Activated CD8-positive, alpha-beta T cell treated with anti-CD3 and anti-CD28 coated beads, Interleukin-2, amount 10 ng/mL, durations not matched to agents 7 days and 5 days (primary cell): ENCODE measurements at regions of chr12 and their contacts with region 1.

Region 1: DNA sequence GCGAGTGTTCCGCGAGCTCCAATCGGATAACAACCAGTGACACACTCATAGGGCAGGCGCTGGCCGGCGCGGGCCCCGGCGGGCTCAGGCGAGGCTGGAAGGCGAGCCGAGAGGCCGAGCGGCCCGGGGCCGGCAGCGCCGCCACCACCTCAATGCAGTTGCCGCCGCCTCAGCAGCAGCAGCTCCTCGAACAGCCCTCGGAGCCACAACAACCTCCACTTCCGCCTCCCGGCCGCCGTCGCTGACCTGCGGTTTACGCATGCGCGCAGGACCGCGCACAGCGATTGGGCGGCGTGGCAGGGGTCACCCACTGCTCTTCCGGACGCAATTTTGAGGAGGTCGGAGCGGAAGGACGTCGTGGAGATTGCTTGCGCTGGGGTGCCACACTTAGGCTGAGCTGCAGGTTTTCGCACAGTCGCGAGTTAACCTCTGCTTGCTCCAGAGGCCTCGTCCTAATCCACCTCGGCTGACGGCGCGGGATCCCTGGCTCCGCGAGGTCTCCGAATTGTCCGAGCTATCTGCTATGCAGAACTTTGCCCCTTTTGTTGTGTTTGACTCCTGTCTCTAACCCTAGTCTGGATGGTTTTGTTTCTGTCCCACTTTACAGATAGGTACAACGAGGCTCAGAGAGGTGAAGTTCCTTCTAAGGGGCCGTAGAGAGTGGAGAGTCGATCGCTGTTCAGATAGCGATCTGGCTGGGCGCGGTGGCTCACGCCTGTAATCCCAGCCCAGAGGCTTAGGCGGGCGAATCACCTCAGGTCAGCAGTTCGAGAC is at the starts of genes ACAD10 and BRAP:
- DNase-seq: peak; percentile 94
- ATAC-seq: peak; percentile 96
- H3K4me3 Mint-ChIP-seq: peak within 1 kb of the TSS; percentile 97
- H3K27ac Mint-ChIP-seq: peak within 1 kb of the TSS; percentile 97
- H3K4me1 Mint-ChIP-seq: peaks cover 31% of the 10 kb centered on the region
- H3K27me3 Mint-ChIP-seq: no peaks in the 10 kb centered on the region
- total RNA-seq, gene ACAD10: 24.9 to 27.3 TPM
- total RNA-seq, gene BRAP: 19.6 to 20.4 TPM

Region 2: DNA sequence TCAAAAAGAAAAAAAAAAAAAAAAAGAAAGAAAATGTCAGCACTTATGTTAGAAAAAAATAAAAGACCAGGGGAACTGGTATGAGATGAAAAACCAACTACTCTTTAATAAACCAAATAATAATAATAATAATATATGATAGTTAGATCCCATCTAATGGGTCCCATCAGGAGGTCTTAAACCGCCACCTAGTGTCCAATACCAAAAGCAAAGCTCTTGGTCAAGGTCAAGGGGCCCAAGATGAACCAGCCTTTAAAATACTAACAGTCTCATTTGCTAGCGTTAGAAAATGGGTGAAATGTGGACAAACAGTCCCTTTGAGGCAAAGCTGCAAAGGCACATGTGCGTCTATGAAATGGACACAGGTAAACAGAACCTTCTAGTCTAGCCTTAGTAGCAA is 12.4 kb before region 1 on chr12:
- CTCF ChIA-PET with region 1: interaction called, 4 read pairs
- POLR2A ChIA-PET with region 1: interaction called, 14 read pairs
- DNase-seq: no peak
- ATAC-seq: no peak
- H3K4me3 Mint-ChIP-seq: no peak overlapping the region
- H3K27ac Mint-ChIP-seq: no peak overlapping the region
- H3K4me1 Mint-ChIP-seq: no peaks in the 10 kb centered on the region
- H3K27me3 Mint-ChIP-seq: no peaks in the 10 kb centered on the region